Activated CD4-positive, alpha-beta T cell treated with anti-CD3 and anti-CD28 coated beads for 36 hours (primary cell): ENCODE measurements at regions of chr6 and their contacts with region 1.

Region 1: DNA sequence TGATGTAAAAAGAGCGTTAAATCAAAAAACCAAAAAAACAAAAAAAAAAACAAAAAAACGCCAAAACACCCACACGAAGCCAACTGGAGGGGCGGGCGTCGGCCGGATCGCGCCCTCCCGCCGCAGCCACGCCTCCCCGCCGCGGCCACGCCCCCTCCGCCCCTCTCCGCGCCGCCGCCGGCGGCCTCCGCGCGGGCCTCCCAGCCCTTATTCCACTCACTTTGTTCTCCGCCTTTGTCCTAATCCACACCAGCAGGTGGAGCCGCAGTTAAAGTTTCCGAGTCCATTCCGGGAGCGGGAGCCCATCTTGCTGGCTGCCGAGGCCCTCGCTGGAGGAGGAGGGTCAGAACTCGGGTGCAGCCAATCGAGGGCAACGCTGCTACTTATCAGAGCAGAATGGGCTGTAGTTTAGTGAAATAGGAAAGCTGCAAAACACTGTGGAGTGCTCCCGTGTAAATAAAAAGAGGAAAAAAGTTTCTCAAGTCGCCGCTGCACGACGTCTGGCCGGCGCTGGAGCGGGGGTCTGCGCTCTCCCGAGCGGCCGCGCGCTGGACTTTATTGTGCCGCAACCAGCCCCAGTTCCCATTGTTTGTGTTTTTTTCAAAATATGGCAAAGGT is at the start of gene ASF1A:
- DNase-seq: peak; percentile 97
- ATAC-seq: peak; percentile 85
- H3K4me3 Mint-ChIP-seq: peak within 1 kb of the TSS; percentile 84
- H3K27ac Mint-ChIP-seq: peak within 1 kb of the TSS; percentile 98
- H3K4me1 Mint-ChIP-seq: peaks cover 50% of the 10 kb centered on the region
- H3K27me3 Mint-ChIP-seq: no peaks in the 10 kb centered on the region
- total RNA-seq, gene ASF1A: 21.2 to 28.6 TPM

Region 2: GRCh38 chr6:117674991-117675657 is 1218.8 kb before region 1 on chr6 and contains the start of gene NUS1:
- CTCF ChIA-PET with region 1: no interaction called
- POLR2A ChIA-PET with region 1: no interaction called
- intact Hi-C with region 1: loop called in 1 of 2 experiments (anchors 5 kb)
- DNase-seq: peak; percentile 98
- ATAC-seq: peak; percentile 96
- H3K4me3 Mint-ChIP-seq: peak within 1 kb of the TSS; percentile 80
- H3K27ac Mint-ChIP-seq: peak within 1 kb of the TSS; percentile 92
- H3K4me1 Mint-ChIP-seq: peaks cover 46% of the 10 kb centered on the region
- H3K27me3 Mint-ChIP-seq: no peaks in the 10 kb centered on the region
- total RNA-seq, gene NUS1: 34.0 to 38.3 TPM

Region 3: DNA sequence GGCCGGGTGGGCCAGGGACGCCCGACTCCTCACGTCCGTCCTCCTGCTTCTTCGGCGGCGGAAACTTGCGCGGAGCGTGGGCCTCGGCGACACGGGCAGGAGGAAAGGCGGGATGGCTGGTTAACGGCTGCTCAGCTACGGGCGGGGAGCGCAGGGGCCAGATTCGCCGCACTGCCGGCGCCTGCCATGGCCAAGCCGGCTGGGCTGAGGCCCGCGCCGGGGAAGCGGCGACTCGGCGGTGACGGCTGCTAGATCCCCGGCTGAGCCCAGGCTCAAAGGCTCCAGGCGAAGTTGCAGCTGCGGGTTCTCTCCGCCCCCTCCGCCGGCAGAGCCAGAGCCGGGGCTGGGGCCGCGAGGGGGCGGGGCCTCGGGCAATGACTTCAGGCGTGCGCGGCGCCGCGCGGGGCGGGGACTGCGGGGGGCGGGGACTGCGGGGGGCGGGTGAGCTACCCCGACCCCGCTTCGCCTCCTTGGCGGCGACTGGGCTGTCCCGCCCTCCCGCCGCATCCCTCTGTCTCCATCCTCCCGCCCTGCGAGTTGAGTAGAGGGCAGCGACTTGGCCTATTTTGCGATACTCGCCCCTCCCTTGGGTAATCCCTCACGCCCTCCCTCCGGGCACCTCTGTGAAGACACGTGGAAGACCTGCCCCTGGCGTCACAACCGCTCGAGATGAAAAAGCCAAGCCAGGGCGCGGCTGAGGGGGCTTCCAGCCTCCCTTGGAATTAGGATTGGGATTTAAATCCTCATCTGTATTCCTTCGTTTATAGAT is 242.4 kb before region 1 on chr6 and contains the start of gene CEP85L:
- CTCF ChIA-PET with region 1: no interaction called
- POLR2A ChIA-PET with region 1: no interaction called
- intact Hi-C with region 1: loop called (anchors 1 to 5 kb)
- DNase-seq: peak; percentile 96
- ATAC-seq: peak; percentile 93
- H3K4me3 Mint-ChIP-seq: peak within 1 kb of the TSS; percentile 85
- H3K27ac Mint-ChIP-seq: peak within 1 kb of the TSS; percentile 94
- H3K4me1 Mint-ChIP-seq: peaks cover 50% of the 10 kb centered on the region
- H3K27me3 Mint-ChIP-seq: no peaks in the 10 kb centered on the region
- total RNA-seq, gene CEP85L: 29.5 to 29.7 TPM

Region 4: DNA sequence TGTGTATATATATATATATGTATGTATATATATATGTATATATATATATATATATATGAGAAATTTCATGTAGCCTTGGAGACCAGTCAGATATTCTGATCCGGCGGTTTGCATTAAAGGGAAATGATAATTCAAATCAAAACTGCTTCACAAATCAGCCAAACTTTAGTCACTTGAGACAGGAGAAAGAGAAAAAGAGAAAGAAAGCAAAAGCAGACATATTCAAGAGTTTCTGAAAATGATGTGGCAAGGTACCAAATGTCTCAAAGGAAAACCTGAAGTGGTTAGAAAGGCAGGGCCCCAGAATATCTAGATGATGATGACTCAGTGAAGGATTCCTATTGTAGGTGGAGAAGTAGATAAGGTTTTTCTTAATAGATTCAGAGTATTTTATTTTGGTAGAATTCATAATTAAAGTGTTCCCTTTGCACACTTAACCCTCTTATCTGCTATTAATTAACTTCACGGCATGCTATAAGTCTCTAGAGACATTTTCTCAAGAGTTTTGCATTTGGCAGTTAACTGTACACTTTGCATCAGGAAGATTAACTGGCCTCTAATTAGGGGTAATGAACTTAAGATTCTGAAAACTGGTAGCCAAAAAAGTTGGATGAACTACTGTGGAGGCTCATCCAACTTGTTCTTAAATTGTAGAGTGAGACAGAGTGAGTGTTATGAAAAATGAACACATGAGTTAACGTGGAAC is 50.1 kb before region 1 on chr6:
- CTCF ChIA-PET with region 1: interaction called, 3 read pairs
- POLR2A ChIA-PET with region 1: interaction called, 3 read pairs
- intact Hi-C with region 1: loop called (anchors 1 kb)
- DNase-seq: peak; percentile 49
- ATAC-seq: peak; percentile 87
- H3K4me3 Mint-ChIP-seq: no peak overlapping the region
- H3K27ac Mint-ChIP-seq: peak overlapping the region; percentile 48
- H3K4me1 Mint-ChIP-seq: peaks cover 26% of the 10 kb centered on the region
- H3K27me3 Mint-ChIP-seq: no peaks in the 10 kb centered on the region

Region 5: DNA sequence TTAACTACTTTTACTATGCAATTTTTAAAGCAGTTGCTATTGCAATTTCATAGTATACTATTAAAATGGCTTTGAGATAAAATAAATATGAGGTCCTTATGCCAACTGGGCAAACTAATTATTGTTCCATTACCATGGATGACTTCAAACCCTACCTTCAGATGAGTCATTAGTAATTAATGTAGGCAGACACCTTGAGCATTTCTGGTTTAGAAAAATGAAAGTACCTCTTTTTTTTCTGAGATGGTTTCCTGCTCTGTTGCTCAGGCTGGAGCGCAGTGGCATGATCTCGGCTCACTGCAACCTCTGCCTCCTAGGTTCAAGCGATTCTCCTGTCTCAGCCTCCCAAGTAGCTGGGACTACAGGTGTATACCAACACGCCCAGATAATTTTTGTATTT is 11.9 kb after region 1 on chr6:
- CTCF ChIA-PET with region 1: interaction called, 32 read pairs
- POLR2A ChIA-PET with region 1: no interaction called
- intact Hi-C with region 1: no loop called
- DNase-seq: no peak
- ATAC-seq: peak; percentile 45
- H3K4me3 Mint-ChIP-seq: no peak overlapping the region
- H3K27ac Mint-ChIP-seq: peak overlapping the region; percentile 75
- H3K4me1 Mint-ChIP-seq: peaks cover 51% of the 10 kb centered on the region
- H3K27me3 Mint-ChIP-seq: no peaks in the 10 kb centered on the region

Region 6: GRCh38 chr6:119078376-119079282 is 184.7 kb after region 1 on chr6 and contains the start of gene FAM184A:
- CTCF ChIA-PET with region 1: interaction called, 3 read pairs
- POLR2A ChIA-PET with region 1: no interaction called
- intact Hi-C with region 1: loop called (anchors 1 to 2 kb)
- DNase-seq: peak; percentile 82
- ATAC-seq: peak; percentile 37
- H3K4me3 Mint-ChIP-seq: peak within 1 kb of the TSS; percentile 77
- H3K27ac Mint-ChIP-seq: peak within 1 kb of the TSS; percentile 94
- H3K4me1 Mint-ChIP-seq: peaks cover 46% of the 10 kb centered on the region
- H3K27me3 Mint-ChIP-seq: no peaks in the 10 kb centered on the region
- total RNA-seq, gene FAM184A: 13.8 to 14.5 TPM